CD4-positive, alpha-beta T cell (primary cell): ENCODE measurements at regions of chr17 and their contacts with region 1.

Region 1: GRCh38 chr17:53912117-53912516 is 89.4 kb downstream of the KIF2B start:
- DNase-seq: no peak
- ATAC-seq: no peak
- H3K4me3 ChIP-seq: no peak overlapping the region
- H3K4me3 Mint-ChIP-seq: no peak overlapping the region
- H3K27ac ChIP-seq: no peak overlapping the region
- H3K27ac Mint-ChIP-seq: no peak overlapping the region
- H3K4me1 ChIP-seq: no peaks in the 10 kb centered on the region
- H3K4me1 Mint-ChIP-seq: no peaks in the 10 kb centered on the region
- H3K27me3 ChIP-seq: no peaks in the 10 kb centered on the region
- H3K27me3 Mint-ChIP-seq: no peaks in the 10 kb centered on the region
- CTCF ChIP-seq: no peak

Region 2: DNA sequence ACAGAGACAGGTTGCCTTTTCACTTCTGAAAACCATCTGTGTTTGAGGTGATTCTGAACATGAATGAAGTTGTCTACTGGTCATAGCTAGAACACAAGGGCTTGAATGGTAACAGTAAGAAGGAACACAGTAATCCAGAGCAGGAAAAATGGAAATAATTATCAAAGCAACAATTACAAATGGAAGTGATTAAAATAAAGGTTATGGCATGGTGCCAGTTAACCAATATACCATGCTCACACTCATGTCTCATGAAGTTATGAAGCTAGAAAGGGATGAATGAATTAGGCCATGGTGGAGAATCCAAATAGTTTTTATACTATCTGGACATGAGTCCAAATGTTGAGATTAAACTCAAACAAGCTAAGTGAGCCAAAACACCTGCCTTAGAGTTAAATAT is 79.7 kb before region 1 on chr17:
- CTCF ChIA-PET with region 1: no interaction called
- POLR2A ChIA-PET with region 1: no interaction called
- intact Hi-C with region 1: loop called in 1 of 2 experiments (anchors 5 kb)
- DNase-seq: no peak
- ATAC-seq: no peak
- H3K4me3 ChIP-seq: no peak overlapping the region
- H3K4me3 Mint-ChIP-seq: no peak overlapping the region
- H3K27ac ChIP-seq: no peak overlapping the region
- H3K27ac Mint-ChIP-seq: no peak overlapping the region
- H3K4me1 ChIP-seq: no peaks in the 10 kb centered on the region
- H3K4me1 Mint-ChIP-seq: no peaks in the 10 kb centered on the region
- H3K27me3 ChIP-seq: no peaks in the 10 kb centered on the region
- H3K27me3 Mint-ChIP-seq: no peaks in the 10 kb centered on the region
- CTCF ChIP-seq: no peak

Region 3: GRCh38 chr17:54046570-54046969 is 134.5 kb after region 1 on chr17:
- CTCF ChIA-PET with region 1: no interaction called
- POLR2A ChIA-PET with region 1: no interaction called
- intact Hi-C with region 1: no loop called
- DNase-seq: no peak
- ATAC-seq: no peak
- H3K4me3 ChIP-seq: no peak overlapping the region
- H3K4me3 Mint-ChIP-seq: no peak overlapping the region
- H3K27ac ChIP-seq: no peak overlapping the region
- H3K27ac Mint-ChIP-seq: no peak overlapping the region
- H3K4me1 ChIP-seq: no peaks in the 10 kb centered on the region
- H3K4me1 Mint-ChIP-seq: no peaks in the 10 kb centered on the region
- H3K27me3 ChIP-seq: no peaks in the 10 kb centered on the region
- H3K27me3 Mint-ChIP-seq: no peaks in the 10 kb centered on the region
- CTCF ChIP-seq: no peak